Dorsolateral prefrontal cortex (tissue), 120 donors: ENCODE measurements at regions of chr2 and their contacts with region 1.

Region 1: GRCh38 chr2:218476676-218477075 is 57.8 kb downstream of the VIL1 start:
- DNase-seq: no peak
- H3K4me3 ChIP-seq: no peak overlapping the region
- H3K27ac ChIP-seq: peak overlapping the region in 2 of 59 donors; percentile 27 to 29
- H3K27me3 ChIP-seq: no peaks in the 10 kb centered on the region
- CTCF ChIP-seq: no peak

Region 2: DNA sequence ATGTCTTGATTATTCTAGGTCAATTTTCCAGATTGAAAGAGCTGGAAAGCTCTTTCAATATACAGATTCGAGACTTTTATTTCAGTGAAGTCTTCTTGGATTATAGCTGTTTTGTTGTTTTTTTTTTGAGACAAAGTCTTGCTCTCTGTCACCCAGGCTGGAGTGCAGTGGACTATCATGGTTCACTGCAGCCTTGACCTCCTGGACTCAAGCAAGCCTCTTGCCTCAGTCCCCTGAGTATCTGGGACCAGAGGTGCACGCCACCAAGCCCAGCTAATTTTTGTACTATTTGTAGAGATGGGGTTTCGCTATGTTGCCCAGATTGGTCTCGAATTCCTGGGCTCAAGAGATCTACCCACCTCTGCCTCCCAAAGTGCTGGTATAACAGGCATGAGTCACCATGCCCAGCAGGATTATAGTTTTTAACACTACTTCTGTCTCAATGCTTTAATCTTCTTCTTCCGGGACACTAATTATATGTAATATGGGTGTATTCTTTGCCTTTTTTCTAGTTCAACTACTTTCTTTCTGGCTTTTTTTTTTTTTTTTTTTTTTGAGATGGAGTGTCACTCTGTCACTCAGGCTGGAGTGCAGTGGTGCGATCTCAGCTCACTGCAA is 29.2 kb after region 1 on chr2:
- intact Hi-C with region 1: loop called in 1 of 2 experiments (anchors 2 kb)
- DNase-seq: no peak
- H3K4me3 ChIP-seq: no peak overlapping the region
- H3K27ac ChIP-seq: no peak overlapping the region
- H3K27me3 ChIP-seq: no peaks in the 10 kb centered on the region
- CTCF ChIP-seq: no peak

Region 3: GRCh38 chr2:218547978-218548377 is 71.3 kb after region 1 on chr2:
- intact Hi-C with region 1: no loop called
- DNase-seq: no peak
- H3K4me3 ChIP-seq: no peak overlapping the region
- H3K27ac ChIP-seq: no peak overlapping the region
- H3K27me3 ChIP-seq: no peaks in the 10 kb centered on the region
- CTCF ChIP-seq: no peak